Activated B cell treated with CpG ODN at 0.5 μM for 24 hours (primary cell): ENCODE measurements at regions of chr1 and their contacts with region 1.

Region 1: GRCh38 chr1:40531381-40532061 is at the start of gene ZNF684:
- DNase-seq: peak; percentile 65
- ATAC-seq: peak; percentile 98
- H3K4me3 Mint-ChIP-seq: peak within 1 kb of the TSS; percentile 97
- H3K27ac Mint-ChIP-seq: peak within 1 kb of the TSS; percentile 92
- H3K4me1 Mint-ChIP-seq: peaks cover 29% of the 10 kb centered on the region
- H3K27me3 Mint-ChIP-seq: peaks cover 2% of the 10 kb centered on the region
- CTCF ChIP-seq: no peak
- total RNA-seq, gene ZNF684: 5.0 and 5.4 TPM in 2 replicates

Region 2: DNA sequence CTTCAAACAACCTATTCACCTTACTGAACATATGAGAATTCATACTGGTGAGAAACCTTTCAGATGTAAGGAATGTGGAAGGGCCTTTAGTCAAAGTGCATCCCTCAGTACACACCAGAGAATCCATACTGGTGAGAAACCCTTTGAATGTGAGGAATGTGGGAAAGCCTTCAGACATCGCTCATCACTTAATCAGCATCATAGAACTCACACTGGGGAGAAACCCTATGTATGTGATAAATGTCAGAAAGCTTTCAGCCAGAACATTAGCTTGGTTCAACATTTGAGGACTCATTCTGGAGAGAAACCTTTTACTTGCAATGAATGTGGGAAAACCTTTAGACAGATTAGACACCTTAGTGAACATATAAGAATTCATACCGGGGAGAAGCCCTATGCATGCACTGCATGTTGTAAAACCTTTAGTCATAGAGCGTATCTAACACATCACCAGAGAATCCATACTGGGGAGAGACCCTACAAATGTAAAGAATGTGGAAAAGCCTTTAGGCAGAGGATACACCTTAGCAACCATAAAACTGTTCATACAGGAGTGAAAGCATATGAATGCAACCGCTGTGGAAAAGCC is 36.1 kb before region 1 on chr1:
- CTCF ChIA-PET with region 1: no interaction called
- POLR2A ChIA-PET with region 1: no interaction called
- intact Hi-C with region 1: no loop called
- DNase-seq: no peak
- ATAC-seq: no peak
- H3K4me3 Mint-ChIP-seq: no peak overlapping the region
- H3K27ac Mint-ChIP-seq: no peak overlapping the region
- H3K4me1 Mint-ChIP-seq: no peaks in the 10 kb centered on the region
- H3K27me3 Mint-ChIP-seq: no peaks in the 10 kb centered on the region
- CTCF ChIP-seq: no peak

Region 3: GRCh38 chr1:40508375-40509341 is 22.9 kb before region 1 on chr1 and contains the start of gene EXO5:
- CTCF ChIA-PET with region 1: interaction called, 11 read pairs
- POLR2A ChIA-PET with region 1: interaction called, 15 read pairs
- intact Hi-C with region 1: loop called (anchors 1 kb)
- DNase-seq: peak; percentile 78
- ATAC-seq: peak; percentile 98
- H3K4me3 Mint-ChIP-seq: peak within 1 kb of the TSS; percentile 94
- H3K27ac Mint-ChIP-seq: peak within 1 kb of the TSS; percentile 81
- H3K4me1 Mint-ChIP-seq: peaks cover 18% of the 10 kb centered on the region
- H3K27me3 Mint-ChIP-seq: no peaks in the 10 kb centered on the region
- CTCF ChIP-seq: no peak
- total RNA-seq, gene EXO5: 11.4 and 13.8 TPM in 2 replicates